PC-9 (cell line): ENCODE measurements at regions of chr1 and their contacts with region 1.

Region 1: GRCh38 chr1:64006276-64007051 is 197.0 kb upstream of the UBE2U start:
- DNase-seq: peak; percentile 71 to 98
- H3K4me3 ChIP-seq: no peak overlapping the region; the same call in 1 of the 2 replicates
- H3K27ac ChIP-seq: peak overlapping the region; percentile 82
- H3K4me1 ChIP-seq: peaks cover 47% of the 10 kb centered on the region
- H3K27me3 ChIP-seq: no peaks in the 10 kb centered on the region
- CTCF ChIP-seq: no peak

Region 2: GRCh38 chr1:63946866-63947491 is 59.5 kb before region 1 on chr1:
- CTCF ChIA-PET with region 1: no interaction called
- POLR2A ChIA-PET with region 1: interaction called, 12 read pairs
- intact Hi-C with region 1: no loop called
- DNase-seq: no peak
- H3K4me3 ChIP-seq: no peak overlapping the region
- H3K27ac ChIP-seq: no peak overlapping the region
- H3K4me1 ChIP-seq: 0 out of 2 replicates have a peak, but pooled peaks cover 5% of the 10 kb centered on the region
- H3K27me3 ChIP-seq: no peaks in the 10 kb centered on the region
- CTCF ChIP-seq: no peak

Region 3: GRCh38 chr1:63980740-63981407 is 25.6 kb before region 1 on chr1:
- CTCF ChIA-PET with region 1: no interaction called
- POLR2A ChIA-PET with region 1: no interaction called
- intact Hi-C with region 1: loop called (anchors 1 kb)
- DNase-seq: peak; percentile 74 to 95
- H3K4me3 ChIP-seq: peak overlapping the region; percentile 4; the same call in 1 of the 2 replicates
- H3K27ac ChIP-seq: peak overlapping the region; percentile 81
- H3K4me1 ChIP-seq: peaks cover 40% of the 10 kb centered on the region
- H3K27me3 ChIP-seq: no peaks in the 10 kb centered on the region
- CTCF ChIP-seq: no peak

Region 4: DNA sequence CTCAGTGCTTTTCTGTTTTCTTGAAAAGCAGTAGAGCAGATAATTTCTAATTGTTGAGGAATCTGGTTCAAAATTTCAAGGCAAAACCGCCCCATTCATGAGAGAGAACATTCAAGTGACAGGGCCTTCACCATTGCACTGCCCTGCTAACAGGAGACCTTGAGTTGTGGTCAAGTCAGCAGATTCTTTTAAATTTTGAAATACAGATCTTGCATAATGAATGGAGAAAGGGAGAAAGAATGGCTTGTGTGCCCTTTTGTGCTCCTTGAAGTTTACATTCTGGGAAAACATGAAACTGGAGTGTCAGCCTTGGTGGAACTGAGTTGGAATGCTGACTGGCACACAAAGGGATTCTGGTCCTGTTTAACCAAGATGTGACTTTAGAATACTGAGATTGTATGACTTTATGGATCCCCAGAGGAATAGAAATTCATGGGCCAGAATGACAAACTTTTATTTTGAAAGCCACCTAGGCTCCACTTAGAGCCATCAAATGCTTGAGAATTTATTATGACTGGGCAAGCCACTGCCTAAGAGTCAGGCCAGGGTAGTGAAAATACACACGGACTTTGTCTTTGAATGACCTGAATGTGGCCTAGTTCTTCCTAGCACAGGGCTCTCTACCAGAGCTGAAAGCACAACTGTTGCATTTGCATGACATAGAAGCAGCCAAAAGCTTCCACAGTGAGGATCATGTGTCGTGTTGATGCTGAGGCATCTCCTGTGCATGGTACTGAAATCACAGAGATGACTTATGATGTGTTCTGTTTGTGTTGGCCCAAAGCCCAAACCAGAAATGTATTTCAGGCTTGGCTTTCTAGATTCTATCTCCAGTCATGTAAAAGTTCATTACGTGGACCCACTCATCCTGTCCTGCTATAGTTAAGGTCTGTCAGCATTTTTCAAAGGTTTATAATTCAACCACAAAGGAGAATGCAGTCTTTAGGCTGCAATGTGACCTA is 32.8 kb after region 1 on chr1:
- CTCF ChIA-PET with region 1: no interaction called
- POLR2A ChIA-PET with region 1: no interaction called
- intact Hi-C with region 1: loop called (anchors 1 kb)
- DNase-seq: peak; percentile 76 to 94
- H3K4me3 ChIP-seq: no peak overlapping the region
- H3K27ac ChIP-seq: peak overlapping the region; percentile 60
- H3K4me1 ChIP-seq: peaks cover 58% of the 10 kb centered on the region
- H3K27me3 ChIP-seq: no peaks in the 10 kb centered on the region
- CTCF ChIP-seq: no peak